OCI-LY7 (cell line): ENCODE measurements at regions of chr4 and their contacts with region 1.

Region 1: DNA sequence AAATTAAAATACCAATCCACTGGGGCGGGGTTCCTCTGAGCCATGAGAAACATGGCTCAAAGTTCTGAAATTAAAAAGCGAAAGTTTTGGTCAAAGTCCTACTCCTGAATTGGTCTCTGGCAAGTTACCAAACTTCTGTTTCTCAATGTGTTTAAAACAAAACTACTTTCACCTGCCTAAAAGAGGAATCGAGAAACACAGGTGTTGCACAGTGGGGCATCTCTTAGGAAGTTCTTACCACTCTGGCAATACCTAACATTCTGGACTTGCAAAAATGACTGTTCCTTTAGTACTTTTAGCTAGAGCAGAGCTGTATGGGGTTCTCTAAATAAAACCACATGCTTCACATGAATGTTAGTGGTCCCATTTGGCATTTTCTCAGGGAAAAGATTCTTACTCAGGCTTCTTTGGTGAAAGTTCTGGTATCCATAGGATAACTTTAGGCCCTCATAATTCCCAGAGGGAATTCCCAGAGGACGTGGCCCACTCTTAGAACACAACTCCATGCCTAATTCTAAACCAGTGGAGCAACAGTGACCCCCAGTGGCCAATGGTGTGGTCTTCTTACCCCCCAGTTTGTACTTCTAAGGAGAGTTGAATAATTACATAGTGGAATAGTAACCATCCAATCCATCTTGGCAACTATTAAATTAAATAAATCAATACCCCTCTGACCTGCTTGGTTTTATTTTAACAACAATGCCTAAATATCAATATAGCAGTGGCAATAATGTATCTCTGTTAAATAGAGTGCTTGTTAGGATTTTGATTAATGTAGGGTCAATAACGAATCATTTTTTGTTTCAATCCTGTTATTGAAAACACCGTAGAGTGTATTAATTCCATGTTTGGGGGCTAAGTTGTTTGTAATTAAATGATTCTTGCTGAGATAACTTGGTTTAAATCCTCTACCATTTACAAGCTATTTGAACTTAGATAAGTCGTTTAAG is 21.9 kb downstream of the BMP3 start:
- DNase-seq: peak; percentile 99
- H3K4me3 ChIP-seq: peak overlapping the region; percentile 50
- H3K27ac ChIP-seq: peak overlapping the region; percentile 95
- H3K4me1 ChIP-seq: peaks cover 75% of the 10 kb centered on the region
- CTCF ChIP-seq: peak; percentile 100

Region 2: GRCh38 chr4:80484712-80485111 is 567.7 kb before region 1 on chr4:
- CTCF ChIA-PET with region 1: no interaction called
- POLR2A ChIA-PET with region 1: interaction called, 5 read pairs
- intact Hi-C with region 1: loop called (anchors 2 kb)
- DNase-seq: no peak
- H3K4me3 ChIP-seq: no peak overlapping the region
- H3K27ac ChIP-seq: no peak overlapping the region
- H3K4me1 ChIP-seq: peaks cover 42% of the 10 kb centered on the region
- CTCF ChIP-seq: no peak

Region 3: DNA sequence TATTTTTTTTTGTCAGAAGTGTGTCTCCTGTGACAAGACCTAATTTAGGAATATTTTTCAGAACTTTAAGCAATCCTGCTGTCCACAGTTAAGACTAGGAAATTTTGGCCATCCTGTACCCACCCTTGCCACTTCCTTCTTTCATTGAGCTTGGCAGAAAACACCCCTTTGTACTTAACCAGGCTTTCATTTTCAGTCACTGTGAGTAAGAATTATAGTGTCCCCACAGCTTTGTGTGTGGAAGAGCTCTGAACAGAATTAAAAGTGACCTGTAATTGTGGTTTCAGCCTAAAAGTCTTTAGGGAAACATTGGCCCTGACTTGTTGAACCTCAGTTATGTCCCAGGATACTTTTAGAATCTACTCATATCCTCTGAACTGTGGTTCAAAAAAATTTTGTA is 175.6 kb before region 1 on chr4:
- CTCF ChIA-PET with region 1: no interaction called
- POLR2A ChIA-PET with region 1: interaction called, 13 read pairs
- intact Hi-C with region 1: loop called (anchors 1 kb)
- DNase-seq: peak; percentile 67
- H3K4me3 ChIP-seq: peak overlapping the region; percentile 4
- H3K27ac ChIP-seq: peak overlapping the region; percentile 98
- H3K4me1 ChIP-seq: peaks cover 58% of the 10 kb centered on the region
- CTCF ChIP-seq: no peak

Region 4: DNA sequence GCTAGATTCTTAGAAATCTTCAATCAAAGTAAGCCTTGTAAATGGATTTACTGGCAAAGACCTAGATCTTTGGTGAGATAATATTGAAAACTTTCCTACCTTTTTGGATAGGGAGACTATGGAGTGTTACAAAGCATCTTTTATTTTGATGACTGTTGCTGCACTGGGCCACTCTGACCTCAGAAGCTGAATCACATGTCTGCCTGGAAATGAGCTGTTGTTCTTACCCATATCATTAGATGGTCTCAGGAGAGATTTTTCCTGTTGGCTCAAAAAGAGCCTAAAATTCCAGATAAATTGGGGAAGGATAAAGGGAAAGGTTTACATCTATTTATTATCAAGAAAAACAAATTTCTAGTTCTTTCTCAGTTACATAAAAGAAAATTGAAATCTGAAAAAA is 149.4 kb before region 1 on chr4:
- CTCF ChIA-PET with region 1: no interaction called
- POLR2A ChIA-PET with region 1: no interaction called
- intact Hi-C with region 1: no loop called
- DNase-seq: no peak
- H3K4me3 ChIP-seq: no peak overlapping the region
- H3K27ac ChIP-seq: no peak overlapping the region
- H3K4me1 ChIP-seq: peaks cover 12% of the 10 kb centered on the region
- CTCF ChIP-seq: no peak

Region 5: GRCh38 chr4:80989921-80990544 is 62.4 kb before region 1 on chr4:
- CTCF ChIA-PET with region 1: interaction called, 5 read pairs
- POLR2A ChIA-PET with region 1: interaction called, 33 read pairs
- intact Hi-C with region 1: loop called (anchors 1 kb)
- DNase-seq: peak; percentile 87
- H3K4me3 ChIP-seq: peak overlapping the region; percentile 5
- H3K27ac ChIP-seq: peak overlapping the region; percentile 97
- H3K4me1 ChIP-seq: peaks cover 45% of the 10 kb centered on the region
- CTCF ChIP-seq: peak; percentile 93

Region 6: GRCh38 chr4:81030061-81030980 is 22.1 kb before region 1 on chr4 and contains the start of gene BMP3:
- CTCF ChIA-PET with region 1: interaction called, 4 read pairs
- POLR2A ChIA-PET with region 1: interaction called, 358 read pairs
- intact Hi-C with region 1: loop called (anchors 1 kb)
- DNase-seq: peak; percentile 82
- H3K4me3 ChIP-seq: peak within 1 kb of the TSS; percentile 79
- H3K27ac ChIP-seq: peak within 1 kb of the TSS; percentile 92
- H3K4me1 ChIP-seq: peaks cover 55% of the 10 kb centered on the region
- CTCF ChIP-seq: no peak
- total RNA-seq, gene BMP3: 40.6 and 45.8 TPM in 2 replicates

Region 7: DNA sequence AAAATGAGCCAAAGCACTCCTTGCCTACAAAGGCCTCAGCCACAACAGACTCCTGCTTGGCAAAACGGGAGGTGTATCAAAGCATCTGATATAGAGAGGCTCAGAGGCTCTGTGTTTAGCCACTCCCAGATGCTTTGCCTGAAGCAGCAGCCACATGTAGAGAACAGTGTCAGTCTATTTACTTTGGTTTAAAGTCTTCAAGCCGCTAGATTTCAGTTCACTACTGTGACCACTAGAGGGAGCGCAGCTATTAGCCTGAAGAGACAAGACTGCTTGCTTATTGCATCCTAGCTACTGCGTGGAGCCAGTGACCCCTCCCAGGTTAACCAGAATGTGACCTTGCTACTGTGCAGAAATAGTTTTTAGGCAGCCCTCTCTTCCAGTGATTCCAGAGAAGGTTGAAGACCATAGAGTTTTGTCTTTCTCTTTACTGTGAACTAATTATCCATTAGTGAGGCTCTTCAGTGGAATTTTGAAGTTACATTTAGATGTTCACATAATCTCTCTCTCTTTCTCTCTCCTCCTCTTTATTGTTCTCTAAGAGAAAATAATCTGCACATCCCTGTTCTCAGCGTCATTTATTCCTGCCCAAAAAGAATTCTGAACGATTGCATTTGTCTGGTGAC is 17.4 kb after region 1 on chr4:
- CTCF ChIA-PET with region 1: no interaction called
- POLR2A ChIA-PET with region 1: interaction called, 16 read pairs
- intact Hi-C with region 1: no loop called
- DNase-seq: peak; percentile 92
- H3K4me3 ChIP-seq: no peak overlapping the region
- H3K27ac ChIP-seq: no peak overlapping the region
- H3K4me1 ChIP-seq: peaks cover 8% of the 10 kb centered on the region
- CTCF ChIP-seq: peak; percentile 97